H1 (cell line): ENCODE measurements at regions of chr17 and their contacts with region 1.

Region 1: DNA sequence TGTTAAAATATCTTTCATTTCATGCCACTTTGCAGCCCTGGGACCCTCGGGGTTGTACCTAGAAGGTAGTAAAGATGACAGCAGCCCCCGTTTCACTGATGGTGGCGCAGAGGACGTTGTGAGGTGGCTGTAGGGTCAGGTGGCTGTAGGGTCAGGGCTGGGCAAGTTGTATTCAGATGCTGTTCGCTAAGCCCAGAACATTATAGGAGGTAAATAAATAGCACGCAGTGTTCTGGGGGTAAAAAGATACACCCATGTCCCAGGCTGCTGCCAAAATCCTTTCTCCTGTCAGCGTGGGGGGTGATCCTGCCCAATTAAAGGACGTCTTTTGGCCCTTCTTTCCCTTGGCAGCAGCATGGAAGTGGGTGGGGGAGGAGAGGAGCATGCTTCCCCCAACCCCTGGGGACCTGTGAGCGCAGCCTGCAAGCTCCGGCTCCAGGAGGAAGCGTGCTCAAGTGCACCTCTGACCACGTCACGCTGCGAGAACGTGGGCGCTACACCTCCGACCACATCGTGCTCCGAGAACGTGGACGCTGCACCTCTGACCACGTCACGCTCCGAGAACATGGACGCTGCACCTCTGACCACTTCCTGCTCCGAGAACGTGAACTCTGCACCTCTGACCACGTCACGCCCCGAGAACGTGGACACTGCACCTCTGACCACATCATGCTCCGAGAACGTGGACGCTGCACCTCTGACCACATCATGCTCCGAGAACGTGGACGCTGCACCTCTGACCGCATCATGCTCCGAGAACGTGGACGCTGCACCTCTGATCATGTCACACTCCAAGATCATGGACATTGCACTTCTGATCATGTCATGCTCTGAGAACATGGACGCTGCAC is 182.1 kb downstream of the RPTOR start:
- DNase-seq: no peak
- H3K4me3 ChIP-seq: no peak overlapping the region
- H3K27ac ChIP-seq: no peak overlapping the region
- H3K4me1 ChIP-seq: peaks cover 0 to 5% (median 2%) of the 10 kb centered on the region in 4 experiments; a peak in 1 of 7 replicates
- H3K27me3 ChIP-seq: no peaks in the 10 kb centered on the region
- CTCF ChIP-seq: no peak
- EP300 ChIP-seq: no peak
- POLR2A ChIP-seq: no peak
- RAD21 ChIP-seq: no peak

Region 2: GRCh38 chr17:80712606-80713005 is 14.2 kb before region 1 on chr17:
- CTCF ChIA-PET with region 1: no interaction called
- POLR2A ChIA-PET with region 1: no interaction called
- DNase-seq: no peak
- H3K4me3 ChIP-seq: no peak overlapping the region
- H3K27ac ChIP-seq: no peak overlapping the region
- H3K4me1 ChIP-seq: peaks cover 0 to 9% (median 1%) of the 10 kb centered on the region in 4 experiments; a peak in 6 of 7 replicates
- H3K27me3 ChIP-seq: no peaks in the 10 kb centered on the region
- CTCF ChIP-seq: no peak
- EP300 ChIP-seq: no peak
- POLR2A ChIP-seq: no peak
- RAD21 ChIP-seq: no peak

Region 3: DNA sequence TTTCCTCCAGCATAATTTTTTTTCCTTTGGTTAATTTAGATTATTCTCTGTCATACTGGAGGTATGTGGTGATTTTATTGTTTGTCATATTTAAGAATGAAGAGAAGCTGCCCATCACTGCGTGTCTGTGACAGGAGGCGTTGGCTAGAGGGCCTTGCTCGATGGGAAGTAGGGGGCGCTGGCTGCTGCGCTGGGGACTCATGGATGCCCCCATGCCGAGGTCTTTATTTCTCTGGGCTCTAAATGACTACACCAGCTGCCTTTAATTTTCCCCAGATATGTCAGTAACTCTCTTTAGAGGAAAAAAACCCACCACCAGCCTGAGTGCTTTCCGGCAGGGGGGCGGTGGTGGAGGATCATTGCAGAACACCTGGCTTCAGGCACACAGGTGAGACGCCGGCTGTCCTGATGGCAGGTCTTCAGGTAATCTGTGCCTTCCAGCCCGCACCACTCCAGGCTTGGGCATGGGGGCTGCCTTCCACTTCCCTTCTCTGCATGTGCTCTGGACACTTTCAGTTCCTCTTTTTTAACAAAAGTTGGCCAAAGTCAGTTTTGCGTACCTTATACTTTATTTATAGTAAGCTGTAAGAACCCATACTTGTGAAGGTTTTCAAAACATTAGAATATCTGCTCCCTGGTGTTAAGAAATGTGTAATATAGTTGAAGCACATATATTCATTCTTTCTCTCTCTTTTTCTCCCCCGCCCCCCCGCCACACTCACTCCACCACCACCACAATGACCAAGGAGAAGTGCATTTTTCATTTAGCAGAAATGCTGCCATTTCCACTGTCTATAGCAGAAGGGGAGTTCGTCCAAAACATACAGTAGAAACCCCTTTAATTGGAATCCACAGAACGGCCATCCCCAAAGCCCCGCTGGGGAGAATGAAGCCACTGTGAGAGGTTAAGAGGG is 10.6 kb after region 1 on chr17:
- CTCF ChIA-PET with region 1: interaction called, 11 read pairs
- POLR2A ChIA-PET with region 1: no interaction called
- DNase-seq: no peak
- H3K4me3 ChIP-seq: no peak overlapping the region
- H3K27ac ChIP-seq: no peak overlapping the region
- H3K4me1 ChIP-seq: peaks cover 0 to 2% (median 0%) of the 10 kb centered on the region in 4 experiments; a peak in 2 of 7 replicates
- H3K27me3 ChIP-seq: no peaks in the 10 kb centered on the region
- CTCF ChIP-seq: peak; percentile 30 to 57 (median 32); a peak in 3 of 4 replicates
- EP300 ChIP-seq: no peak
- POLR2A ChIP-seq: no peak
- RAD21 ChIP-seq: peak; percentile 38 to 49

Region 4: GRCh38 chr17:80855948-80856862 is 129.4 kb after region 1 on chr17:
- CTCF ChIA-PET with region 1: no interaction called
- POLR2A ChIA-PET with region 1: no interaction called
- DNase-seq: no peak
- H3K4me3 ChIP-seq: no peak overlapping the region
- H3K27ac ChIP-seq: no peak overlapping the region
- H3K4me1 ChIP-seq: peaks cover 4 to 35% (median 13%) of the 10 kb centered on the region in 4 experiments
- H3K27me3 ChIP-seq: no peaks in the 10 kb centered on the region
- CTCF ChIP-seq: no peak
- EP300 ChIP-seq: no peak
- POLR2A ChIP-seq: no peak
- RAD21 ChIP-seq: no peak